ENCODE measurements at regions of chr3 and their contacts with region 1.

Region 1: DNA sequence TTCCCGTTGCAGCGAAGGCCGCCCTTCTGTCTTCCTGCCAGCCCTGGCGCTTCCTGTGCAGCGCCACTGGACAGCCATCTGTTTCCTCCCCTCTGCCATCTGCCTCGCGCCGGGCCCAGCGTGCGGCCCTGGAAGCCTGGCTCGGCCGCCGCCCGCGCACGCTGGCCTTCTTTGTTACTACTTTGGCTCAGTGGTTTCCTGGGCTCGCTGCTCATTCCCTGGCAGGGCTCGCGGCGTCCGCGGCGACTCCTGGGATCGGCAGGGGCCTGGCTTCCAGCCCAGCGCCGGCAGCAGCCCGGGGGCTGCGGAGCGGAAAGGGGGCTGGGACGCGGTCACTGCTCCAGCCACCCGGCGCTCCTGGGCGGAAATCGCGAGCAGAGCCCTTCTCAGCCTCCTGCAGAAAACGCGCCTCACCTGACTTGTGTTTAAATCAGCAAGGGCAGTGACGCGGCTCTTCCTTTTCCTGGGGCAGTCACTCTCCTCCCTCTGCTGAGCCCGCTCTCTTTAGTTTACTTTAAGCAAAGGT is 10.0 kb downstream of the CMTM7 start:
- DNase-seq: peak in 8 of 9 donors; percentile 45 to 71 (median 64)
- ATAC-seq: peak; percentile 76
- H3K4me3 ChIP-seq: peak overlapping the region; percentile 63
- H3K4me3 Mint-ChIP-seq: peak overlapping the region; percentile 83 to 96 (median 92)
- H3K27ac ChIP-seq: peak overlapping the region; percentile 87
- H3K27ac Mint-ChIP-seq: peak overlapping the region; percentile 92 to 100 (median 99)
- H3K4me1 ChIP-seq: peaks cover 30 to 44% of the 10 kb centered on the region in 2 donors
- H3K4me1 Mint-ChIP-seq: peaks cover 46 to 95% (median 78%) of the 10 kb centered on the region in 7 donors
- H3K27me3 ChIP-seq: no peaks in the 10 kb centered on the region
- H3K27me3 Mint-ChIP-seq: no peaks in the 10 kb centered on the region

Region 2: GRCh38 chr3:32077260-32078084 is 324.1 kb before region 1 on chr3:
- CTCF ChIA-PET with region 1: no interaction called
- POLR2A ChIA-PET with region 1: no interaction called
- intact Hi-C with region 1: no loop called
- DNase-seq: no peak
- ATAC-seq: no peak
- H3K4me3 ChIP-seq: no peak overlapping the region
- H3K4me3 Mint-ChIP-seq: no peak overlapping the region
- H3K27ac ChIP-seq: no peak overlapping the region
- H3K27ac Mint-ChIP-seq: no peak overlapping the region
- H3K4me1 ChIP-seq: no peaks in the 10 kb centered on the region
- H3K4me1 Mint-ChIP-seq: no peaks in the 10 kb centered on the region
- H3K27me3 ChIP-seq: no peaks in the 10 kb centered on the region
- H3K27me3 Mint-ChIP-seq: peaks cover 0 to 13% (median 4%) of the 10 kb centered on the region in 5 donors

Region 3: DNA sequence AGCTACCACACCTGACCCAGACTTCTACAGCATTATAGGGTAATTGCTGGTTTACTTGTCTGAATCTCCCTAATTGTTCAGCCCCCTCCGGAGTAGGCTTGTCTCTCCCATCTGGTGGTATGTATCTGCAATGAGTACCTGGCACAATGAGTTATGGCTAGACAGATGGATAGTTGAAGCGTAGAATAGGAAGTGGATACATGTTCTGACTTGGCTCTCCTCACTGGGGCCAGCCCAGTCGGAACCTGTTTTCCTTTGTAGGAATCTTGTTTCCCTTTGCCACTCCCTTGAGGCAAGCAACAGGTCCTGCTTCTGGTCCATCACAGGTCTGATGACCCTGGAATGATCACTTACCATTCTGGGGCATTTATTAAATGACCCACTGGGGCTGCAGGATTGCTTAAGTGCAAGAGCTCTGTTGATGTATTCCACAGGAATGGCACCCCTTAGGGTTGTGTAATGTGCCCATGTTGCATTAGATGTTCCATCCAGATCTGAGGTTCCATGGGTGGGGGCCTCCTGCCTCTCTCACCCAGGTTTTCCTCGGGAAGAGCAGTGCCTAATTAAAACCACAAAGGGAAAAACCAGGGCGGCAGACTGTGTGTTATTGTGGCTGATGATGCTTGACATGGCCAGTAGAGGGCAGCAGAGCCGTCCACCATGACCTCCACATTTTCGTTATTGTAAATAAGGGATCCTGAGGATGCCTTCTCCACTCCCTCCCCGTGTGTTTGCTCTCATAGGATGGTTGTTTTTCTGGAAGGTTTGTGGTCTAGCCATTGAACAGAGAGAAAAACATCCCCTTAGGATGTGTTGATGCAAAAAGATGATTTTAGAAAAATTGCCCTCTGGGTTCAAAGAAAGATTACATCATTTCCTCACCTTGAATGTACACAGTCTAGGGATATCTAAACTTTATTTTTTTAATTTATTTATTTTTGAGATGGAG is 105.1 kb before region 1 on chr3:
- CTCF ChIA-PET with region 1: interaction called, 3 read pairs
- POLR2A ChIA-PET with region 1: no interaction called
- intact Hi-C with region 1: loop called (anchors 1 kb)
- DNase-seq: peak; percentile 35 to 73 (median 62)
- ATAC-seq: peak; percentile 89
- H3K4me3 ChIP-seq: no peak overlapping the region
- H3K4me3 Mint-ChIP-seq: peak overlapping the region; percentile 60 to 80 (median 72)
- H3K27ac ChIP-seq: peak overlapping the region; percentile 53
- H3K27ac Mint-ChIP-seq: peak overlapping the region; percentile 89 to 99 (median 95)
- H3K4me1 ChIP-seq: peaks cover 15 to 18% of the 10 kb centered on the region in 2 donors
- H3K4me1 Mint-ChIP-seq: peaks cover 21 to 65% (median 39%) of the 10 kb centered on the region in 7 donors
- H3K27me3 ChIP-seq: no peaks in the 10 kb centered on the region
- H3K27me3 Mint-ChIP-seq: no peaks in the 10 kb centered on the region

Region 4: GRCh38 chr3:32340039-32340438 is 61.6 kb before region 1 on chr3:
- CTCF ChIA-PET with region 1: interaction called, 3 read pairs
- POLR2A ChIA-PET with region 1: no interaction called
- intact Hi-C with region 1: loop called (anchors 1 to 2 kb)
- DNase-seq: peak in 7 of 9 donors; percentile 31 to 65 (median 56)
- ATAC-seq: peak; percentile 77
- H3K4me3 ChIP-seq: no peak overlapping the region
- H3K4me3 Mint-ChIP-seq: no peak overlapping the region
- H3K27ac ChIP-seq: no peak overlapping the region
- H3K27ac Mint-ChIP-seq: no peak overlapping the region
- H3K4me1 ChIP-seq: peaks cover 0 to 18% of the 10 kb centered on the region in 2 donors
- H3K4me1 Mint-ChIP-seq: peaks cover 18 to 30% (median 27%) of the 10 kb centered on the region in 7 donors
- H3K27me3 ChIP-seq: no peaks in the 10 kb centered on the region
- H3K27me3 Mint-ChIP-seq: no peaks in the 10 kb centered on the region

Region 5: GRCh38 chr3:32420126-32421038 is 18.8 kb after region 1 on chr3:
- CTCF ChIA-PET with region 1: interaction called, 5 read pairs
- POLR2A ChIA-PET with region 1: interaction called, 88 read pairs
- intact Hi-C with region 1: loop called in 1 of 2 experiments (anchors 2 kb)
- DNase-seq: peak in 1 of 9 donors; percentile 37
- ATAC-seq: peak; percentile 39
- H3K4me3 ChIP-seq: no peak overlapping the region
- H3K4me3 Mint-ChIP-seq: peak overlapping the region; percentile 58 to 84 (median 76)
- H3K27ac ChIP-seq: peak overlapping the region; percentile 68
- H3K27ac Mint-ChIP-seq: peak overlapping the region; percentile 76 to 99 (median 94)
- H3K4me1 ChIP-seq: peaks cover 30 to 91% of the 10 kb centered on the region in 2 donors
- H3K4me1 Mint-ChIP-seq: peaks cover 69 to 100% (median 97%) of the 10 kb centered on the region in 7 donors
- H3K27me3 ChIP-seq: no peaks in the 10 kb centered on the region
- H3K27me3 Mint-ChIP-seq: no peaks in the 10 kb centered on the region

Region 6: DNA sequence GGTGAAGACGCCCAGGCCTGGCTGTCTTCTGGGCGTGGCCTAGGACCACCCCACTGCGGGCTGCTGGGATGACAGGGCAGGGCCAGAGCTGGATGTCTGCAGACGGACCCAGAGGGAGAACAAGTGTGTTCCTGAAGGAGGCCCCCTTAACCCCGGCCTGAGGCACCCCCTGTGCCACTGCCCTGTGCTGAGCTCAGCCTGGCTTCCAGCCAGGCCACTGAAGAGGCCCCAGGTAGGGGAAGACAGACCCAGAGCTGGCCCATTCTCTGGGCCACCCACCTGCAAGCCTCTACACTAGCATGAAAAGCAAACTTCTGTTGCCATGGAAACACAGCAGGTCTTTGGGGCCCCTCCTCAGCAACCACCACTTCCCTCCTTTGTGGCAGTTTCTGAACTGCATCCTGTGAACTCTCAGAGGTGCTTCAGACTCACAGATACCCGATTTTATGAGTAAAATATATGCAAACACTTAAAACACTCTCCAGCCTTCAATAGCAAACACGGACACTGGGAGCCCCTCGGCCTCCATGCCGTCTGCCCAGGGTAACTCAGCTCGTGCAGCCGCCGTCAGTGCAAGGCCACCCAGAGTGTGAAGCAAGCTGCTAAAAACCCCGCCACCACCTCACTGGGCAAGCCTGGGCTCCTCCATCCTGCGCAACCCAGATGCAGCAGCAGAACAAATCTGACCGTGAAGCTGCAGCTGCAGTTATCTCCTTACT is 58.6 kb after region 1 on chr3:
- CTCF ChIA-PET with region 1: interaction called, 5 read pairs
- POLR2A ChIA-PET with region 1: interaction called, 13 read pairs
- intact Hi-C with region 1: loop called (anchors 1 kb)
- DNase-seq: peak; percentile 52 to 95 (median 94)
- ATAC-seq: peak; percentile 87
- H3K4me3 ChIP-seq: peak overlapping the region; percentile 34
- H3K4me3 Mint-ChIP-seq: peak overlapping the region in 5 of 10 donors; percentile 25 to 92 (median 87)
- H3K27ac ChIP-seq: peak overlapping the region; percentile 97
- H3K27ac Mint-ChIP-seq: no peak overlapping the region
- H3K4me1 ChIP-seq: peaks cover 71 to 77% of the 10 kb centered on the region in 2 donors
- H3K4me1 Mint-ChIP-seq: peaks cover 30 to 45% (median 33%) of the 10 kb centered on the region in 7 donors
- H3K27me3 ChIP-seq: no peaks in the 10 kb centered on the region
- H3K27me3 Mint-ChIP-seq: no peaks in the 10 kb centered on the region

Measured in naive thymus-derived CD4-positive, alpha-beta T cell (primary cell).